GM13976 (cell line): ENCODE measurements at regions of chr2 and their contacts with region 1.

Region 1: DNA sequence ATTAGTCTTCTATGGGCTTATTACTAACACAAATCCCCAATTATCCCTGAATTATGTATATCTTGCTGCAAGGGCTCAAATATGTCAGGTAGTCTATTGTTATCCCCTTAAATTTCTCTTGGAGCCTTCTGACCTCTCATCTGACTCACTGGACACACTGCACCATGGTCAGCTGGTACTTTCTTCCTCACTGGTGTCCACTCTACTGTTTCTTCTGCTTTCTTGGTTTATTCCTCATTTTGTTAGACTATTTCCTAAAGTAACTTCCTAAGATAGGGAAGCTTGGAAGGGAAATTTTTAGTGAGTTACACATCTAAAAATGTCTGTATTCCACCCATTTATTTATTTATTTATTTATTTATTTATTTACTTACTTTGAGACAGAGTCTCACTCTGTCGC is 26.5 kb downstream of the WDR35 start:
- DNase-seq: no peak
- CTCF ChIP-seq: no peak

Region 2: DNA sequence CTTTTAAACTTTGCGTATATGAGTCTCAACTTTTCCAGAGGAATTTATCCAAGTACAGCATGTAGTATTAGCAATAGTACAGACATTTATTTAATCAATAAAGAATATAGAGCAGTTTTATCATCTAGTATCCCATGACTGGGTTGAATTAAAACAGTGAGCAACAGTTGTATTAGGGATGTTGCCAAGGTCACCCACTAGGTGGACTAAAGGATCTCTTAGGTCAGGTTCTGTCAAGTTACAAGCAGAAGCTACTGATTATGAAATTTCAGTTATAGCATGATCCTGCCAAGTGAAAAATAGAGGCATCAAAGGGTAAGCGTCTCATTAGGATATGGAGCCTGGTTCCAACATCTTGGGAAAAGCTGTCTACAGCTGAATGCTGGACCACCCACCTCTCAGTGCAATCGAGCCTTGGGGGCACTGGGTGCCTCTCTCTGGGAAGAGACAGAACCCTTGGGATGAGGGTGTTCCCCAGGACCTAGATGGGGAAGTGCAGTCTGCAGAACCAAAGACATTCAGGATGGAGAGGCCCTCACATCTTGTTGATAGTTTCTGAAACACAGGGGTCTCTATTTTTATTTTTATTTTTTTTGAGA is 140.2 kb after region 1 on chr2:
- in situ Hi-C with region 1: loop called (anchors 5 kb)
- DNase-seq: no peak
- CTCF ChIP-seq: no peak